ENCODE measurements at regions of chr3 and their contacts with region 1.

Region 1: GRCh38 chr3:184874709-184875644 is 63.0 kb downstream of the VPS8 start:
- DNase-seq: no peak
- H3K4me3 Mint-ChIP-seq: no peak overlapping the region
- H3K27ac Mint-ChIP-seq: no peak overlapping the region
- H3K4me1 Mint-ChIP-seq: peaks cover 14% of the 10 kb centered on the region
- H3K27me3 Mint-ChIP-seq: no peaks in the 10 kb centered on the region

Region 2: DNA sequence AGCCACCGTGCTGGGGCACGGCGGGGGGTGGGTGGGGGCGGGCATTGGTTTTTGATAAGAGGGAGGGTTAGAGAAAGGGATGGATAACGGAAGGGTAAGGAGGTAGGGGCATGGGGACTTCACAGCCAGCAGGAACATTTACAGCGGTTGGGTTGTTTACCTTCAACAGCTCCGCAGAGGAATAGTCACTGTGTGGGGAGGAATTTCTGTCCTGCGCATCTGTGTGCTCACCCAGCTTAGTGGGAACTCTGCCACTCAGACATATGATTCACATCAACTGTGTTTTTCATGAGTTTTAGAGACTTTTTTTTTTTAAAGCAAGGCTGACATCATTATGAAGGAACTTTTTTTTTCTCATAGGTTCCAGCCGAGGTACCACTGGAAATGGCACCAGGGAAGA is 475.6 kb before region 1 on chr3:
- intact Hi-C with region 1: no loop called
- DNase-seq: no peak
- H3K4me3 Mint-ChIP-seq: no peak overlapping the region
- H3K27ac Mint-ChIP-seq: no peak overlapping the region
- H3K4me1 Mint-ChIP-seq: no peaks in the 10 kb centered on the region
- H3K27me3 Mint-ChIP-seq: peaks cover 20% of the 10 kb centered on the region

Region 3: GRCh38 chr3:185176750-185177359 is 301.9 kb after region 1 on chr3:
- intact Hi-C with region 1: loop called (anchors 1 kb)
- DNase-seq: no peak
- H3K4me3 Mint-ChIP-seq: no peak overlapping the region
- H3K27ac Mint-ChIP-seq: no peak overlapping the region
- H3K4me1 Mint-ChIP-seq: no peaks in the 10 kb centered on the region
- H3K27me3 Mint-ChIP-seq: no peaks in the 10 kb centered on the region

Region 4: GRCh38 chr3:185308126-185308754 is 433.3 kb after region 1 on chr3:
- intact Hi-C with region 1: loop called (anchors 10 kb)
- DNase-seq: peak; percentile 14
- H3K4me3 Mint-ChIP-seq: no peak overlapping the region
- H3K27ac Mint-ChIP-seq: no peak overlapping the region
- H3K4me1 Mint-ChIP-seq: peaks cover 5% of the 10 kb centered on the region
- H3K27me3 Mint-ChIP-seq: no peaks in the 10 kb centered on the region

Region 5: GRCh38 chr3:185319801-185320200 is 444.8 kb after region 1 on chr3:
- intact Hi-C with region 1: no loop called
- DNase-seq: no peak
- H3K4me3 Mint-ChIP-seq: no peak overlapping the region
- H3K27ac Mint-ChIP-seq: no peak overlapping the region
- H3K4me1 Mint-ChIP-seq: peaks cover 3% of the 10 kb centered on the region
- H3K27me3 Mint-ChIP-seq: peaks cover 4% of the 10 kb centered on the region

Measured in activated T-helper 2 cell treated with anti-CD3 and anti-CD28 coated beads, Interferon-gamma antibody, Interleukin-2, Interleukin-4, amounts not matched to agents 10 μg/mL and 5 μg/mL and 100 μg/mL, durations not matched to agents 14 hours and 24 hours and 36 hours (primary cell).